Activated CD4-positive, alpha-beta memory T cell treated with anti-CD3 and anti-CD28 coated beads for 36 hours (primary cell): ENCODE measurements at regions of chr10 and their contacts with region 1.

Region 1: DNA sequence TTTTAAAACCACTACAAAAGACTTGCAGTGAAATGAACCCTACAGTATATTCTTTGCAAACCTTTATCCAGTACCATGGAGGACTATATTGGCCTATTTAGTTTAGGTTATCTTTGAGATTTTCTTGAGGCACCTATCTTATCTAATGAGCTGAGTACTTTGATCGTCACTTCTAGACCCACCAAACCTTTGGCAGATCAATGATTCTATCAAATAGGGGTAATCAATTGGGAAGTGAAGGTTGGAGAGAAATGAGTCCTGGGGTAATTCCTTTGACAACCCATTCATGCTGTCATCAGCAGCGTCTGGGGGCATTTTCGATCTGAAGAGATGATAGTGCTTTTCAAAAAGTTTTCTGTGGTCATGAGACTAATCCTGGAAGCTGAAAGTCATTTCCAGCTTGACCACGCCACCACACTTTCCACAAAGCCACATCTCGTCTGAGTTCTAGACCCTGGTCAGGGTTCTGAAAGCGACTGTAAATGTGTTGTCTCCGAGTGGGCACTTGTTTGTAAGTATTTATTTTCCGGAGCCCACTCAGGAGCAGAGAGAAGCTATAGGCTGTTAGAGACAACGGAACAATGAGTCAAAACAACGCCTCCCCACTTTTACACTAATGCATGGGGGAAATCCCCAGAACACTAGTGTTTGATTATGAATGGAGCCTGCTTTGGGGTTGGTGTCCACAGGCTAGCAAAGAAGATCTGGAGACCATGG is 4.8 kb downstream of the EGR2 start:
- DNase-seq: peak; percentile 94
- H3K4me3 Mint-ChIP-seq: peak overlapping the region; percentile 88
- H3K27ac Mint-ChIP-seq: peak overlapping the region; percentile 88
- H3K4me1 Mint-ChIP-seq: peaks cover 79% of the 10 kb centered on the region
- H3K27me3 Mint-ChIP-seq: no peaks in the 10 kb centered on the region

Region 2: GRCh38 chr10:62384057-62384446 is 427.3 kb before region 1 on chr10:
- CTCF ChIA-PET with region 1: no interaction called
- POLR2A ChIA-PET with region 1: interaction called, 3 read pairs
- intact Hi-C with region 1: loop called (anchors 1 kb)
- DNase-seq: peak; percentile 73
- H3K4me3 Mint-ChIP-seq: no peak overlapping the region
- H3K27ac Mint-ChIP-seq: peak overlapping the region; percentile 48
- H3K4me1 Mint-ChIP-seq: peaks cover 61% of the 10 kb centered on the region
- H3K27me3 Mint-ChIP-seq: no peaks in the 10 kb centered on the region

Region 3: GRCh38 chr10:62637249-62638061 is 173.9 kb before region 1 on chr10:
- CTCF ChIA-PET with region 1: interaction called, 3 read pairs
- POLR2A ChIA-PET with region 1: interaction called, 20 read pairs
- intact Hi-C with region 1: loop called (anchors 1 kb)
- DNase-seq: peak; percentile 84
- H3K4me3 Mint-ChIP-seq: no peak overlapping the region
- H3K27ac Mint-ChIP-seq: no peak overlapping the region
- H3K4me1 Mint-ChIP-seq: peaks cover 26% of the 10 kb centered on the region
- H3K27me3 Mint-ChIP-seq: no peaks in the 10 kb centered on the region

Region 4: GRCh38 chr10:62748386-62748785 is 62.9 kb before region 1 on chr10:
- CTCF ChIA-PET with region 1: interaction called, 3 read pairs
- POLR2A ChIA-PET with region 1: interaction called, 5 read pairs
- intact Hi-C with region 1: loop called (anchors 1 kb)
- DNase-seq: no peak
- H3K4me3 Mint-ChIP-seq: peak overlapping the region; percentile 12
- H3K27ac Mint-ChIP-seq: peak overlapping the region; percentile 59
- H3K4me1 Mint-ChIP-seq: peaks cover 25% of the 10 kb centered on the region
- H3K27me3 Mint-ChIP-seq: no peaks in the 10 kb centered on the region

Region 5: DNA sequence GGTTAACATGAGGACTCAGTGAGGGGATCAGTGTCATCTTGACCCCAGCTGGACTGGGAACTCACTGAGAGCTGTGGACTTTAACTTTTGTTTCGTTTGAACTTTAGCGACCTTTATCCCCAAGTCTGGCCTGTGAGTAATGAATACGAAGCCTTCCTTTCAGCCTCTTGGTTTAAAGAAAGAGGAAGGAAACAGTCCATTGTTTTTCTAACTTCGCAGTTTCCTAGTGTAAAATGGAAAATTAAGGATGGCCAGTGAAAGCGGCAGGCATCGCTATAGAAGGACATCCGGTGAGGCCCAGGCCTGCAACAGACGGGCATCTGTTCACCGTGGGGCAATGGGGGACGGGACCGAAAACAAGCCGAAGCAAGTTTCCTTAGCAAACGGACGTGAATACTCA is 50.9 kb before region 1 on chr10:
- CTCF ChIA-PET with region 1: no interaction called
- POLR2A ChIA-PET with region 1: no interaction called
- intact Hi-C with region 1: no loop called
- DNase-seq: no peak
- H3K4me3 Mint-ChIP-seq: no peak overlapping the region
- H3K27ac Mint-ChIP-seq: no peak overlapping the region
- H3K4me1 Mint-ChIP-seq: peaks cover 18% of the 10 kb centered on the region
- H3K27me3 Mint-ChIP-seq: no peaks in the 10 kb centered on the region

Region 6: DNA sequence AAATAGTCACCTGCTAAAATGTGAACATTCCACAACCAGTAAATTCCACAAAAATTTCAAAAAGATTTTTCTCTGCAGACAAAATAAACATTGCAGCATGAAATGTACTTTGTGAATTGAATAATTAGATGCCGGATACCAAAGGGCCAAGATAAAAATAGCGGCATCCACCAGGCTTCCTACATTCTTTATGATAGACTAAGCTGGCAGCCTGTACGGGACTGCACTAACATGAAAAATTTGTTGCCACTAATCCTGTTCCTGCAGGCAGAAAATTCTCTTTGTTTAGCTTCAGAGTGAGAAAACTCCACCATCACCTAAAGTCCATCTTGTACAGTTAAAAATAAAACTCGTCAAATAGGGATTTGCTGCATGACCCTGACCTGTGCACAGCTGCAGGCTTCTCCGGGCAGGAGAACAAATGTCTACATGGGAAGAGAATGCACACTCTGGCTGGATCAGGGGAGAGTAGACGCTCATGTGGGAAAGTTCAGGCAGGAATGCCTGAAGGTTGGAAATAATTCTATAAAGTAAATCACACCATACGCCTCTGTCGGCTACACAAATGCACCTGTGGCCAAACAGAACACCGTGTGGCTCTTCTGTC is 22.4 kb before region 1 on chr10:
- CTCF ChIA-PET with region 1: no interaction called
- POLR2A ChIA-PET with region 1: no interaction called
- intact Hi-C with region 1: no loop called
- DNase-seq: no peak
- H3K4me3 Mint-ChIP-seq: no peak overlapping the region
- H3K27ac Mint-ChIP-seq: no peak overlapping the region
- H3K4me1 Mint-ChIP-seq: no peaks in the 10 kb centered on the region
- H3K27me3 Mint-ChIP-seq: peaks cover 5% of the 10 kb centered on the region

Region 7: GRCh38 chr10:62858364-62858763 is 47.0 kb after region 1 on chr10:
- CTCF ChIA-PET with region 1: interaction called, 33 read pairs
- POLR2A ChIA-PET with region 1: interaction called, 21 read pairs
- intact Hi-C with region 1: loop called (anchors 1 kb)
- DNase-seq: no peak
- H3K4me3 Mint-ChIP-seq: no peak overlapping the region
- H3K27ac Mint-ChIP-seq: no peak overlapping the region
- H3K4me1 Mint-ChIP-seq: peaks cover 61% of the 10 kb centered on the region
- H3K27me3 Mint-ChIP-seq: peaks cover 9% of the 10 kb centered on the region